ENCODE measurements at regions of chr15 and their contacts with region 1.

Region 1: GRCh38 chr15:95259513-95259912 is 1028.2 kb downstream of the MCTP2 start:
- DNase-seq: peak; percentile 7 to 61
- H3K4me3 ChIP-seq: no peak overlapping the region
- H3K27ac ChIP-seq: no peak overlapping the region
- H3K4me1 ChIP-seq: peaks cover 0 to 6% (median 0%) of the 10 kb centered on the region in 4 experiments; a peak in 2 of 7 replicates
- H3K27me3 ChIP-seq: peaks cover 0 to 1% (median 0%) of the 10 kb centered on the region in 4 experiments; a peak in 1 of 7 replicates
- CTCF ChIP-seq: peak; percentile 59 to 77 (median 74)
- EP300 ChIP-seq: no peak
- POLR2A ChIP-seq: no peak
- RAD21 ChIP-seq: peak; percentile 94 to 96

Region 2: GRCh38 chr15:94893091-94893490 is 366.4 kb before region 1 on chr15:
- CTCF ChIA-PET with region 1: no interaction called
- POLR2A ChIA-PET with region 1: no interaction called
- DNase-seq: no peak
- H3K4me3 ChIP-seq: no peak overlapping the region
- H3K27ac ChIP-seq: no peak overlapping the region
- H3K4me1 ChIP-seq: no peaks in the 10 kb centered on the region
- H3K27me3 ChIP-seq: no peaks in the 10 kb centered on the region
- CTCF ChIP-seq: no peak
- EP300 ChIP-seq: no peak
- POLR2A ChIP-seq: no peak
- RAD21 ChIP-seq: no peak

Region 3: DNA sequence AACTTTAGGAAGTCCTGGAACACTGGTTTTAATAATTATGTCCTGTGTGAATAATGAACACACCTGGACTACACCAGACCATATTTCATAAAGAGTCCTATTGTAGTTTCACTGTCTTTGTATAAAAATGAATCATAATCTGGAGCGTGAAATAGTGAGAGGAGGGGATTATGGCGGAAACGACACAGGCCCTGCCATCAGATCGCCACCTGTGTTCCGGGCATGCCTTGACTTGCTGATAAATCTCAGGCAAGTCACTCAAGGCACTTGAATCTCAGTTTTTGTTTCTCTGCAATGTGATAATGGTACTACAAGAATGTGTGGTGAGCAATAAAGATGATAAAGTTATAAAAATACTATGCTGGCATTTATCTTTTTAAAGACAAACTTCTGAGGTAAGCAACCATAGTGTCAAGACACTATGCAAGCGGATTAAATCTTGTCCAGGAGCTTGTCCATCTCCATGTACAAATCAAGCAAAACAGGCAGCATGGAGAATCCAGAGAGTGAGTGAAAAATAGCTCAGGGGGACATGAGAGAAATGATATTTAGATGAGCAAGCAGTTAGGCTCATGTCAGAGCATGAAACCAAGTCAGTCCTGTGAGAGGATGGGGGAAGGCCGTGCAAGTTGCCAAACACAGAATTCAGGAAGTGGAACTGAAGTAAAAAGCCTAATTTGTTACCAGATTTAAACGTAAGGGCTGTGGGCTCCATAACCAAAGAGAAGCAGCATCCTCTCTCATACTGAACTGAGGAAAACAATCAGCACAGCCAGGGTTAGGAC is 32.5 kb before region 1 on chr15:
- CTCF ChIA-PET with region 1: no interaction called
- POLR2A ChIA-PET with region 1: no interaction called
- DNase-seq: no peak
- H3K4me3 ChIP-seq: no peak overlapping the region
- H3K27ac ChIP-seq: no peak overlapping the region
- H3K4me1 ChIP-seq: no peaks in the 10 kb centered on the region
- H3K27me3 ChIP-seq: no peaks in the 10 kb centered on the region
- CTCF ChIP-seq: no peak
- EP300 ChIP-seq: no peak
- POLR2A ChIP-seq: no peak
- RAD21 ChIP-seq: no peak

Region 4: DNA sequence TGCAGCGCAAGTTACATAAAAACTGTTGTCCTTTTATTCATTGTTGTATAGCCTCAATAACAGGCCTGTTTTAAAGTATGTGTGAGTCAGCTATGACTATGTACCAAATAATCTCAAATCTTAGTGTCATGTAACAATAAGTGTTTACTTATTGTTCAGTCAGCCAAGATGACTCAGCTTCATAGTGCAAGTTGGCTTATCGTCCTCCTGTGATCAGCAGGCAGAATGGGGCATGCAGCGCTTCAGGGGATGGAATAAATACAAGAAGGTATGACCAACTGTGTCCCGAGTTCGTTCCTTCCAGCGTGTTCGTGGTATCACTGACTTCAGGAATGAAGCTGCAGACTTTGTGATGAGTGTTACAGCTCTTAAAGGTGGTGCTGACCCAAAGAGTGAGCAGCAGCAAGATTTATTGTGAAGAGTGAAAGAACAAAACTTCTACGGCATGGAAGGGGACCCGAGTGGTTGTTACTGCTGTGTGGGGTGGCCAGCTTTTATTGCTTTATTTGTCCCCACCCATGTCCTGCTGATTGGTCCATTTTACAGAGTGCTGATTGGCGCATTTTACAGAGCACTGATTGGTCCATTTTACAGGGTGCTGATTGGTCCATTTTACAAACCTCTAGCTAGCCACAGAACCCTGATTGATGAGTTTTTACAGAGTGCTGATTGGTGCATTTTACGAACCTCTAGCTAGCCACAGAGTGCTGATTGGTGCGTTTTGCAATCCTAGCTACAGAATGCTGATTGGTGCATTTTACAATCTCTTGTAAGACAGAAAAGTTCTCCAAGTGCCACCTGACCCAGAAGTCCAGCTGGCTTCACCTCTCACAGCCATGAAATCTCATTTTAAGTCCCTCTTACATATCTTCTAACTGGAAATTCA is 12.2 kb before region 1 on chr15:
- CTCF ChIA-PET with region 1: interaction called, 12 read pairs
- POLR2A ChIA-PET with region 1: no interaction called
- DNase-seq: no peak
- H3K4me3 ChIP-seq: no peak overlapping the region
- H3K27ac ChIP-seq: no peak overlapping the region
- H3K4me1 ChIP-seq: no peaks in the 10 kb centered on the region
- H3K27me3 ChIP-seq: peaks cover 0 to 1% (median 0%) of the 10 kb centered on the region in 4 experiments; a peak in 1 of 7 replicates
- CTCF ChIP-seq: no peak
- EP300 ChIP-seq: no peak
- POLR2A ChIP-seq: no peak
- RAD21 ChIP-seq: no peak

Region 5: GRCh38 chr15:95284933-95285421 is 25.5 kb after region 1 on chr15:
- CTCF ChIA-PET with region 1: interaction called, 29 read pairs
- POLR2A ChIA-PET with region 1: no interaction called
- DNase-seq: no peak
- H3K4me3 ChIP-seq: no peak overlapping the region
- H3K27ac ChIP-seq: no peak overlapping the region
- H3K4me1 ChIP-seq: peaks cover 0 to 14% (median 8%) of the 10 kb centered on the region in 4 experiments; a peak in 5 of 7 replicates
- H3K27me3 ChIP-seq: peaks cover 0 to 1% (median 0%) of the 10 kb centered on the region in 4 experiments; a peak in 1 of 7 replicates
- CTCF ChIP-seq: no peak
- EP300 ChIP-seq: no peak
- POLR2A ChIP-seq: no peak
- RAD21 ChIP-seq: peak; percentile 45 to 54; a peak in 3 of 4 replicates

Region 6: DNA sequence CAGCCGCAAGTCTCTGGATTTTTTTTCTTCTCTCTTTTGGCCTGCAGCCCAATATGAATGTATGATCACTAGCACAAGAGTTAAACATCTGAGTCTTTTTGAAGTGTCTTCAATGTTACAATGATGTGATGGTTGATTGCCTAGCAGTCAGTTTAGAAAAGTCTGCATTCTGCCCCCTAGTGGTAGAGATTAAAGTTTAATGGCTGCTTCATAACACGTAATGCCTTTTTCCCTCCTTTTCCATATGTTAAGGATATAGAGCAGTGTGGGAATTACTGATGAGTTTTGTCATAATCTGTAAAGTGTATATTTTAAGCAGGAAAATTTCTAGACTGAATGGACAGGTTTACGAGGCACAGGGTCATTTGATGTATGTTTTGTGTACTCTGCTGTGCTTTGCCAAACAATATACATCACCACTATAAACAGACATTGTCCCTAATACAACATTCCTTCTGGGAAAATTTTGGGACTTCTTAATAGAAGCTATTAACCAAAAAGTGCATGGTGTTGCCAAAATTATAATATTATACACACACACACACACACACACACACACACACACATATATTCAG is 32.5 kb after region 1 on chr15:
- CTCF ChIA-PET with region 1: interaction called, 29 read pairs
- POLR2A ChIA-PET with region 1: no interaction called
- DNase-seq: no peak
- H3K4me3 ChIP-seq: no peak overlapping the region
- H3K27ac ChIP-seq: no peak overlapping the region
- H3K4me1 ChIP-seq: peaks cover 0 to 7% (median 4%) of the 10 kb centered on the region in 4 experiments; a peak in 5 of 7 replicates
- H3K27me3 ChIP-seq: no peaks in the 10 kb centered on the region
- CTCF ChIP-seq: peak in 2 of 3 experiments; percentile 48 to 77; a peak in 3 of 4 replicates
- EP300 ChIP-seq: no peak
- POLR2A ChIP-seq: no peak
- RAD21 ChIP-seq: peak; percentile 40 to 48